Activated B cell treated with CpG ODN at 0.5 μM for 24 hours (primary cell): ENCODE measurements at regions of chr5 and their contacts with region 1.

Region 1: DNA sequence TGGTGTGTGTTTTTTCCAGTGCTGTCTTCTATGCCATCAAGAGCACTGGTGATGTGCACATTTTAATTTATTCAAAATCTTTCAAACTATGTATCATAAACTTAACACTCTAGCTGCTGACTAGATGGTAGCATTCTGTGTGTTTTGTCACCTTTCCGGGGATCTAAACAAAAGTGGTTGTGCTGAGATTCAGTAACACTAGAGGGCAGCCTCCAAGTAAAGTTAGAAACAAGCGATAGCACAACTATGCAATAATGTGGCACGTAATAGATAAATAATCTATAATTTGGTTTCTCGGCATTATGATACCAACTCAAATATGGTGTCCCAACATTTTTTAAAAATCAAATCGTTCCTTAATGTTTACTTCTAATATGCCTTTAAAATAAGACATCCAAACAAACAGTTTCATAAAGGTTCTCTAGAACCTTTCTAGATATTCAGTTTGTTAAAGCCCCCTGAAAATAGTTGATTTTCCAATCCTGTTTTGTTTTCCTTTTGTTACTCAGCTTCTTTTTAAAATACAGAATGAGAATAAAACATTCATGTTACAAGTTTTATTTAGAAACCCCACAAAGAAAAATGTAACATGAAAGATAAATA is 16.9 kb downstream of the SEMA6A start:
- DNase-seq: no peak
- ATAC-seq: no peak
- H3K4me3 Mint-ChIP-seq: no peak overlapping the region
- H3K27ac Mint-ChIP-seq: no peak overlapping the region
- H3K4me1 Mint-ChIP-seq: peaks cover 21% of the 10 kb centered on the region
- H3K27me3 Mint-ChIP-seq: no peaks in the 10 kb centered on the region
- CTCF ChIP-seq: no peak

Region 2: GRCh38 chr5:116574367-116575325 is 16.9 kb after region 1 on chr5 and contains the start of gene SEMA6A:
- CTCF ChIA-PET with region 1: no interaction called
- POLR2A ChIA-PET with region 1: no interaction called
- intact Hi-C with region 1: no loop called
- DNase-seq: peak; percentile 46
- ATAC-seq: peak; percentile 69
- H3K4me3 Mint-ChIP-seq: peak within 1 kb of the TSS; percentile 83
- H3K27ac Mint-ChIP-seq: no peak within 1 kb of the TSS
- H3K4me1 Mint-ChIP-seq: peaks cover 42% of the 10 kb centered on the region
- H3K27me3 Mint-ChIP-seq: peaks cover 54% of the 10 kb centered on the region
- CTCF ChIP-seq: no peak
- total RNA-seq, gene SEMA6A: 0.20 TPM in 2 replicates

Region 3: GRCh38 chr5:116947691-116948528 is 390.1 kb after region 1 on chr5:
- CTCF ChIA-PET with region 1: no interaction called
- POLR2A ChIA-PET with region 1: no interaction called
- intact Hi-C with region 1: loop called (anchors 5 kb)
- DNase-seq: peak; percentile 31
- ATAC-seq: peak; percentile 79
- H3K4me3 Mint-ChIP-seq: no peak overlapping the region
- H3K27ac Mint-ChIP-seq: no peak overlapping the region
- H3K4me1 Mint-ChIP-seq: peaks cover 5% of the 10 kb centered on the region
- H3K27me3 Mint-ChIP-seq: no peaks in the 10 kb centered on the region
- CTCF ChIP-seq: peak; percentile 47